Heart right ventricle (tissue), 16 donors: ENCODE measurements at regions of chr1 and their contacts with region 1.

Region 1: GRCh38 chr1:159798893-159799292 is 3.3 kb upstream of the FCRL6 start:
- DNase-seq: peak; percentile 31 to 79
- ATAC-seq: peak; percentile 81 to 94 (median 90)
- H3K4me3 ChIP-seq: no peak overlapping the region
- H3K27ac ChIP-seq: no peak overlapping the region
- H3K4me1 ChIP-seq: peaks cover 0 to 37% (median 0%) of the 10 kb centered on the region in 9 donors
- H3K27me3 ChIP-seq: peaks cover 0 to 30% (median 15%) of the 10 kb centered on the region in 7 donors
- CTCF ChIP-seq: peak; percentile 58 to 85 (median 81)

Region 2: DNA sequence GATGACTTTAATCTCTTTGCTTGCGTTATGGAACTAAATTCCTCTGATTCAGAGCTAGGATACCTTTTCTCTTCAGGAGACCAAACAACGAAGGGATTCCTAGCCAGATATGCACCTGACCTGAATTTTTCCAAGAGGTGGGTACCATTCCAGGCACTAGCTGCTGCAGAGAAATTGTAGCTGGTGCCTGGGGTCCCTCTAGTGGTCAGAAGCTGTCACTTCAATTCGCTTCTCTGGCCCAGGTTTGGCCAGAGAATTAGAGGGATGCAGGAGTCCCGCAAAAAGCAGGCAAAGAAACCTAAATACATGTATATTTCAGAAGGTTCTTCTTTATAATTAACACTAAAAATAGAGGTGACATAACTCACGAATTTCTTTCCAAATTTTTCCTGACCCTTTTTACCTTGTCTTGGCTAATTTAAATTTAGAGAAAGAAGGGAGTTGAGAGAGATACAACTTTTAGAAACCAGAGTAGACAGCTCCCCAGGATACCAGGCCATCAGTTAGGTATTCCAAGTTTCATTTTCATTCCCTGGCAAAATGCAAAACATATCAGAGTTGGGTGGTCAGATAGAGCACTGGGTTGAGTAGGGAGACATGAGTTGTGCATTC is 584.6 kb before region 1 on chr1:
- intact Hi-C with region 1: loop called in 3 of 10 experiments (anchors 10 kb)
- DNase-seq: peak in 1 of 2 donors; percentile 22
- ATAC-seq: peak in 1 of 8 donors; percentile 69
- H3K4me3 ChIP-seq: no peak overlapping the region
- H3K27ac ChIP-seq: no peak overlapping the region
- H3K4me1 ChIP-seq: peaks cover 0 to 14% (median 8%) of the 10 kb centered on the region in 9 donors
- H3K27me3 ChIP-seq: peaks cover 0 to 65% (median 34%) of the 10 kb centered on the region in 7 donors
- CTCF ChIP-seq: peak; percentile 78 to 95 (median 89)

Region 3: DNA sequence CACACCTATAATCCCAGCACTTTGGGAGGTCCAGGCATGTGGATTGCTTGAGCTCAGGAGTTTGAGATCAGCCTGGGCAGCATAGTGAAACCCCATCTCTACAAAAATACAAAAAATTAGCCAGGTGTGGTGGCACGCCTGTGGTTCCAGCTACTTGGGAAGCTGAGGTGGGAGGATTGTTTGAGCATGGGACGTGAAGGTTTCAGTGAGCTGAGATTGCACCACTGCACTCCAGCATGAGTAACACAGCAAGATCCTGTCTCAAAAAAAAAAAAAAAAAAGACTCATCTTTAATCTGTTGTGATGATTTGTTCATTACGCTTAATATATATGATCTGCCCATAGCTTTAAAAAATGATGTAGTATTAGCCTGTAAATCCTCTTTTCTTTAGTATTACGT is 315.4 kb before region 1 on chr1:
- intact Hi-C with region 1: no loop called
- DNase-seq: no peak
- ATAC-seq: no peak
- H3K4me3 ChIP-seq: no peak overlapping the region
- H3K27ac ChIP-seq: no peak overlapping the region
- H3K4me1 ChIP-seq: no peaks in the 10 kb centered on the region
- H3K27me3 ChIP-seq: no peaks in the 10 kb centered on the region
- CTCF ChIP-seq: no peak

Region 4: GRCh38 chr1:159612211-159612885 is 186.5 kb before region 1 on chr1:
- intact Hi-C with region 1: no loop called
- DNase-seq: no peak
- ATAC-seq: no peak
- H3K4me3 ChIP-seq: no peak overlapping the region
- H3K27ac ChIP-seq: no peak overlapping the region
- H3K4me1 ChIP-seq: no peaks in the 10 kb centered on the region
- H3K27me3 ChIP-seq: no peaks in the 10 kb centered on the region
- CTCF ChIP-seq: no peak

Region 5: GRCh38 chr1:159854693-159855192 is 55.9 kb after region 1 on chr1:
- intact Hi-C with region 1: loop called in 1 of 10 experiments (anchors 5 kb)
- DNase-seq: peak; percentile 88 to 91
- ATAC-seq: peak; percentile 95 to 99 (median 96)
- H3K4me3 ChIP-seq: peak overlapping the region; percentile 63 to 96 (median 76)
- H3K27ac ChIP-seq: peak overlapping the region; percentile 93 to 99 (median 98)
- H3K4me1 ChIP-seq: peaks cover 0 to 32% (median 19%) of the 10 kb centered on the region in 9 donors
- H3K27me3 ChIP-seq: no peaks in the 10 kb centered on the region
- CTCF ChIP-seq: peak in 3 of 9 donors; percentile 26 to 44 (median 26)

Region 6: GRCh38 chr1:159936273-159936904 is 137.5 kb after region 1 on chr1:
- intact Hi-C with region 1: loop called in 1 of 10 experiments (anchors 5 kb)
- DNase-seq: peak; percentile 58 to 77
- ATAC-seq: peak; percentile 63 to 84 (median 72)
- H3K4me3 ChIP-seq: no peak overlapping the region
- H3K27ac ChIP-seq: no peak overlapping the region
- H3K4me1 ChIP-seq: peaks cover 0 to 17% (median 14%) of the 10 kb centered on the region in 9 donors
- H3K27me3 ChIP-seq: peaks cover 0 to 6% (median 0%) of the 10 kb centered on the region in 7 donors
- CTCF ChIP-seq: peak; percentile 94 to 99 (median 97)

Region 7: DNA sequence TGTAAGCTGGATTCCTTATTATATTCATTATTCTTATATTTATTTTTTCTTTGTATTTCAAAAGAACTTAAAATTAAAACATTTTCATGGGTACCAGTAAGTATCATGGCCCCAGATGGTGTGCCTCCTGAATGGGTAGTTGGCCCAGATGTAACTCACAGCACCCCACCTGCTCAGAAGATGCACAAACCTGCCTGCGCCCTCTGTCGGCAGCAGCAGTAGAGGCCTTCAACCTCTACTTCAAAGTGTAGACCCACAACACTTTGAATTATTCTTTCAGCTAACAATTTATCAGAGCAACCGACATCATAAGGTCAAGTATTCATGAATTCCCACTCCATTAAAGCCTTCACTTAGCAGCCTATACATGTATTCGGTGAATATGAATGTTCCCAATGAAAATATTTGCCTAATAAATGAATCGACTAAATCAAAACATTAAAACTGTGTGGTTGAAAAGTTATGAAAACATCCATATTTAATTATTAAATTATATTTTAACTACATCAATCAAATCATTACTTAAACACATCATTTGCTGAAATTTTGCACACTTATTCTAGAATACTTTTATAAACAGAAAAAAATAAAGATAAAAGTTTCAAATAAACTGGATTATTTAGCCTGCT is 207.5 kb after region 1 on chr1:
- intact Hi-C with region 1: loop called in 8 of 10 experiments (anchors 1 to 10 kb)
- DNase-seq: peak; percentile 35 to 72
- ATAC-seq: peak in 4 of 8 donors; percentile 47 to 78 (median 54)
- H3K4me3 ChIP-seq: no peak overlapping the region
- H3K27ac ChIP-seq: no peak overlapping the region
- H3K4me1 ChIP-seq: no peaks in the 10 kb centered on the region
- H3K27me3 ChIP-seq: no peaks in the 10 kb centered on the region
- CTCF ChIP-seq: peak; percentile 36 to 91 (median 77)